ENCODE measurements at regions of chr19 and their contacts with region 1.

Region 1: GRCh38 chr19:48780631-48781391 is 25.5 kb downstream of the FGF21 start:
- DNase-seq: no peak
- ATAC-seq: no peak

Region 2: DNA sequence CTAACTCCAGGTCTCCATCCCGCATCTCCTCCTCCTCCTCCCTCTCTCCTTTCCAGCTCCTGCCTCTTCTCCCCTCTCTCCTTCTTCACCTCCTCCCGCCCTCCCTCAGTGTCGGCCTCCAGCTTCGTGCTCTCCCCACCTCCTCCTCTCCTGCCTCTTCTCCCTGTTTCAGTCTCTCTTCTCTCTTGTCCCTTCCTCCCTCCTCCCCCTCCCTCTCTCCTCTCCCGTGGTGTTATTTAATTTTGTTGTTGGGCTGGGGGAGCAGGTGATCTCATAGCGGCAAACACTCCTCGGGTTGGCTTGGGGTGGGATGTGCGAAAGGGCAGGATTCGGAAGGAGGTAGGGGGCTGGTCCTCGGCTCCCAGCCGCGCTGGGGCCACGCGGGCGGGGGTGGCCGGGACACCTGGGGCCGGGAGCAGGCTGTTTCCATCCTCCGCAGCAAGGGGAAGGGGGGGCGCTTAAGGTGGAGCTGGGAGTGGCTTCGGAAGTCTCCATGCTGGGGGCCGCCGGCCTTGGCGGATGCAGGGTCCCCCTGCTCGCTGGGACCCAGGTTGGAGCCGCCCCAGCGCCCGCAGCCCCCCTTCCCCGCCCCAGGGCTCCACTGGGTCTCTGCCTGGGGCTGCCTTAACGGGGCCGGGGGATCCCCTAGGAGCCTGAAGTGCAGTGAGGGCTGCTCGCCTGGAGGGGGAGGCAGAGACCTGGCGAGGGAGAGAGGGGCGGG is 134.7 kb before region 1 on chr19 and contains the start of gene CA11:
- intact Hi-C with region 1: loop called (anchors 5 kb)
- DNase-seq: peak; percentile 87
- ATAC-seq: peak; percentile 92
- total RNA-seq, gene CA11: 8.4 TPM

Region 3: GRCh38 chr19:48674921-48675824 is 105.6 kb before region 1 on chr19:
- intact Hi-C with region 1: loop called (anchors 5 kb)
- DNase-seq: peak; percentile 80
- ATAC-seq: peak; percentile 80

Region 4: DNA sequence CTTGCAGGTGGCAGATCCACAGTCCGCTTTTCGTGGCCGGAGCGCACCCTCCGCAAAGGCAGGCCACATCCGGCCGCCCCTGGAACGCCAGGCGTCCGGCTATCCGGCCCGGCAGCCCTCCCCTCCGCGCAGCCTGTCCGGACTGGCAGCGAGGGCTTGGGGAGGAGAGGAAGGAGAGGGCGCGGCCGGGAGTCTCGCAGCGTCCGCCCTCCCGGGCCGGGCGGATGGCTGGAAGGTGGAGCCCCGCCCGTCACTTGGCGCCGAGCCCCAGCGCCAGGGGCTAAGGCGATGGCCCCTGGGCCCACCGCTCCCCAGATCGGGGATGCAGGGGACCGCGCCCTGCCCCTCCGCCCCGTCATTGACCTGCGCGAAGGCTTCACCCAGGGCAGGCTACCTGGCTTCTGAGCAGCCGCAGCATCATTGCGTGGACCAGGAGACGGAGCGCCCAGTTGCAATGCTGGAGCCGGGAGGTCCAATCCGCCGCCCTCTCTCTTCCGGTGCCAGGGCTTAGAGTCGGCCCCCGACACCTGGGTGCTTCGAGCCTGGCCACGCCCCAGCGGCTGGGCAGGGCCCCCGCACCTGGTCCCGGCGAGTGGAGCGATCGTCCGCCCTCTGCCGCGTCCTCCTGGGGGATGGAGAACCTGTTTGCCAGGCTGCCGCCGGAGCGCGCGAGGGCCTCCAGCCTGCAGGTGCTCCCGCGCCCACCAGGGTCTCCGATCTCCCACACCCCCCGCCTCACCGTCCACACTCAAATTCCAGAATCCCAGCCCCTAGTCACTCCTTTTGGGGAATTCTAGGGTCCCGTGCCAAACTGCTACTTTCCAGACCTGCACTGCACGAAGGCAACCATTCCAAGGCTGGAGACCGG is 28.1 kb before region 1 on chr19 and contains the start of gene FUT1:
- intact Hi-C with region 1: loop called (anchors 2 kb)
- DNase-seq: peak; percentile 77
- ATAC-seq: peak; percentile 80
- total RNA-seq, gene FUT1: 2.1 TPM